GM12878 (cell line): ENCODE measurements at regions of chr19 and their contacts with region 1.

Region 1: GRCh38 chr19:41597600-41598041 is 21.7 kb downstream of the CEACAM21 start:
- DNase-seq: peak; percentile 45
- ATAC-seq: peak; percentile 94
- H3K4me3 ChIP-seq: no peak overlapping the region
- H3K27ac ChIP-seq: no peak overlapping the region
- H3K4me1 ChIP-seq: no peaks in the 10 kb centered on the region
- H3K27me3 ChIP-seq: peaks cover 0 to 3% of the 10 kb centered on the region in 2 experiments; a peak in 3 of 4 replicates
- CTCF ChIP-seq: peak; percentile 83 to 98 (median 95)
- EP300 ChIP-seq: no peak
- POLR2A ChIP-seq: no peak
- RAD21 ChIP-seq: peak; percentile 68

Region 2: DNA sequence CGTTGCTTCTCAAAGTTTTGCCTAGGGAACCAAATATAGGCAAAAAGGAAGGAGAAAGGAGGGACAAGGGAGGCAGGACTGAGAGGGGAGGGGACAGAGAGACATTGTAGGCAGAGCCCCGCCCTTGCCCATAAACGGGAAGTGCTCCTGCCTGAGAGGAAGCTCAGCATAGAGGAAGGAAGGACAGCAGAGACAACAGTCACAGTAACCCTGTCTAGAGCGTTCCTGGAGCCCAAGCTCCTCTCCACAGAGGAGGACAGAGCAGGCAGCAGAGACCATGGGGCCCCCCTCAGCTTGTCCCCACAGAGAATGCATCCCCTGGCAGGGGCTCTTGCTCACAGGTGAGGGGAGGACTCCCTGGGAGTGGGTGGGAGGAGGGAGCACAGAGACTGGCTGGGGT is 21.6 kb before region 1 on chr19 and contains the start of gene CEACAM21:
- CTCF ChIA-PET with region 1: interaction called, 19 read pairs
- POLR2A ChIA-PET with region 1: no interaction called
- RAD21 ChIA-PET with region 1: interaction called, 3 read pairs
- SMC1A ChIA-PET with region 1: interaction called, 7 read pairs
- in situ Hi-C with region 1: no loop called
- intact Hi-C with region 1: no loop called
- DNase-seq: no peak
- ATAC-seq: peak; percentile 99
- H3K4me3 ChIP-seq: peak within 1 kb of the TSS; percentile 67
- H3K27ac ChIP-seq: peak within 1 kb of the TSS; percentile 57
- H3K4me1 ChIP-seq: peaks cover 8% of the 10 kb centered on the region; the same call in 1 of the 2 replicates
- H3K27me3 ChIP-seq: no peaks in the 10 kb centered on the region
- CTCF ChIP-seq: no peak
- EP300 ChIP-seq: no peak
- POLR2A ChIP-seq: peak; percentile 71
- RAD21 ChIP-seq: no peak
- polyA plus RNA-seq, gene CEACAM21: 0.87 to 1.0 TPM